MCF 10A (cell line): ENCODE measurements at regions of chr15 and their contacts with region 1.

Region 1: GRCh38 chr15:59528965-59529402 is 82.6 kb upstream of the GCNT3 start:
- DNase-seq: peak; percentile 92
- H3K4me3 Mint-ChIP-seq: no peak overlapping the region
- H3K27ac Mint-ChIP-seq: no peak overlapping the region
- H3K4me1 Mint-ChIP-seq: peaks cover 6% of the 10 kb centered on the region
- H3K27me3 Mint-ChIP-seq: no peaks in the 10 kb centered on the region
- CTCF ChIP-seq: peak; percentile 88

Region 2: GRCh38 chr15:58227706-58228543 is 1301.1 kb before region 1 on chr15:
- CTCF ChIA-PET with region 1: no interaction called
- POLR2A ChIA-PET with region 1: no interaction called
- intact Hi-C with region 1: loop called (anchors 1 kb)
- DNase-seq: peak; percentile 85
- H3K4me3 Mint-ChIP-seq: no peak overlapping the region
- H3K27ac Mint-ChIP-seq: no peak overlapping the region
- H3K4me1 Mint-ChIP-seq: peaks cover 6% of the 10 kb centered on the region
- H3K27me3 Mint-ChIP-seq: no peaks in the 10 kb centered on the region
- CTCF ChIP-seq: peak; percentile 92

Region 3: GRCh38 chr15:59501597-59501996 is 27.4 kb before region 1 on chr15:
- CTCF ChIA-PET with region 1: interaction called, 12 read pairs
- POLR2A ChIA-PET with region 1: interaction called, 5 read pairs
- intact Hi-C with region 1: no loop called
- DNase-seq: peak; percentile 75
- H3K4me3 Mint-ChIP-seq: no peak overlapping the region
- H3K27ac Mint-ChIP-seq: no peak overlapping the region
- H3K4me1 Mint-ChIP-seq: no peaks in the 10 kb centered on the region
- H3K27me3 Mint-ChIP-seq: no peaks in the 10 kb centered on the region
- CTCF ChIP-seq: peak; percentile 74

Region 4: GRCh38 chr15:59543721-59544547 is 14.9 kb after region 1 on chr15:
- CTCF ChIA-PET with region 1: interaction called, 19 read pairs
- POLR2A ChIA-PET with region 1: interaction called, 4 read pairs
- intact Hi-C with region 1: no loop called
- DNase-seq: no peak
- H3K4me3 Mint-ChIP-seq: no peak overlapping the region
- H3K27ac Mint-ChIP-seq: no peak overlapping the region
- H3K4me1 Mint-ChIP-seq: peaks cover 15% of the 10 kb centered on the region
- H3K27me3 Mint-ChIP-seq: no peaks in the 10 kb centered on the region
- CTCF ChIP-seq: no peak

Region 5: GRCh38 chr15:59562448-59563186 is 33.6 kb after region 1 on chr15:
- CTCF ChIA-PET with region 1: interaction called, 14 read pairs
- POLR2A ChIA-PET with region 1: no interaction called
- intact Hi-C with region 1: loop called (anchors 1 kb)
- DNase-seq: no peak
- H3K4me3 Mint-ChIP-seq: no peak overlapping the region
- H3K27ac Mint-ChIP-seq: no peak overlapping the region
- H3K4me1 Mint-ChIP-seq: peaks cover 11% of the 10 kb centered on the region
- H3K27me3 Mint-ChIP-seq: no peaks in the 10 kb centered on the region
- CTCF ChIP-seq: peak; percentile 22

Region 6: DNA sequence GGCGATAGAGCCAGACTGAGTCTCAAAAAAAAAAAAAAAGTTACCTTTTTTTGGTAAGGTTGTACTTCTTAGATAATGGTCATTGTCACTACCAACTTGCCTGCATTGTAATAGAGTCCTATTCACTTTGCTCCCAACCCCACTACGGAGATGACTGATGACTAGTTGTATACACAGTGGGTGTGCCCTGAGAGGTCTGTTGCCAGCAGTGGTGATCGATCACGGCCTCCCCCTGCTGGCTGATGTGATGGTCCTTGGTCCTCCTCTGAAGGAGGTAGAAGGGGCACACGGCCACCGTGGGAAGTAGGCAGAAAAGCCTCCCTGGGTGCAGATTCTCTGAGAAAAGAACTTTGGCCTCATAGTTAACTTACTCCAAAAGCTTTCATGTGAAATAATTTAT is 93.3 kb after region 1 on chr15:
- CTCF ChIA-PET with region 1: interaction called, 12 read pairs
- POLR2A ChIA-PET with region 1: interaction called, 3 read pairs
- intact Hi-C with region 1: loop called (anchors 1 kb)
- DNase-seq: peak; percentile 72
- H3K4me3 Mint-ChIP-seq: no peak overlapping the region
- H3K27ac Mint-ChIP-seq: no peak overlapping the region
- H3K4me1 Mint-ChIP-seq: no peaks in the 10 kb centered on the region
- H3K27me3 Mint-ChIP-seq: no peaks in the 10 kb centered on the region
- CTCF ChIP-seq: peak; percentile 51

Region 7: DNA sequence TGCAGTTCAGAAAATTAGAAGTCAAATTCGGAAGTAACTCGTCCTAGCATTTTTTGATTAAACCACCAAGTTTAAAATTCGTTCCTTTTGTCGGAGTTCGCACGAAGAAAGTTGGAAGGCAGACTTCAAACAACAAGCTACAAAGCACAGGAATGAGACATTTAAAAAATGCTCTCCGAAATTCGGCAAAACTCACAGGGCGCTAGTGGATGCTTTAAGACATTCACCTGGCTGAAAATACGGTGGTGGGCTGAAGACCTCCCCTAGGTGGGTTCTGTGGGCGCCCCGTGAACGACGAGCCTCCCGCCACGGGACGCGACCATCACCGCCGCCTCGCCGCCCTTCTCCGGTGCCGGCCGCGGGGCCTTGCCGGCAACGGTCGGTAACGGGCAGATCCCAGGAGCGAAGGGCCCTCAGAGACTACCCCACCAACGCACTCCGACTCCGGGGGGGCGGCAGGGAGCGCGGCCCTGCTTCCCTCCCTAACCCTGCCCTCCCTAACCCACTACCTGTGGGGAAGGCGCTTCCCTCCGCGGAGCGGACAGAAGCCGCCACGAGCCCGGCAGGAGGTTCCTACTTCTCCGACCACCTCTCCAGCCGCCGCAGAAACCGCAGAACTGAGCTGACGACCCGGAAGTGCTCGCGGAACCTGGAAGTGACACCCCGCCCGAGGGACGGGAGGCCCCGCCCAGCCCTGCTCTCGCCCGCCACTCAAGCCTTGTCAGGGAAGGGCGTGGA is 128.1 kb after region 1 on chr15 and contains the start of gene GTF2A2:
- CTCF ChIA-PET with region 1: interaction called, 21 read pairs
- POLR2A ChIA-PET with region 1: interaction called, 8 read pairs
- intact Hi-C with region 1: no loop called
- DNase-seq: peak; percentile 96
- H3K4me3 Mint-ChIP-seq: no peak within 1 kb of the TSS
- H3K27ac Mint-ChIP-seq: peak within 1 kb of the TSS; percentile 84
- H3K4me1 Mint-ChIP-seq: no peaks in the 10 kb centered on the region
- H3K27me3 Mint-ChIP-seq: no peaks in the 10 kb centered on the region
- CTCF ChIP-seq: no peak
- total RNA-seq, gene GTF2A2: 152 and 165 TPM in 2 replicates